Heart left ventricle (tissue), 16 donors: ENCODE measurements at regions of chr21 and their contacts with region 1.

Region 1: DNA sequence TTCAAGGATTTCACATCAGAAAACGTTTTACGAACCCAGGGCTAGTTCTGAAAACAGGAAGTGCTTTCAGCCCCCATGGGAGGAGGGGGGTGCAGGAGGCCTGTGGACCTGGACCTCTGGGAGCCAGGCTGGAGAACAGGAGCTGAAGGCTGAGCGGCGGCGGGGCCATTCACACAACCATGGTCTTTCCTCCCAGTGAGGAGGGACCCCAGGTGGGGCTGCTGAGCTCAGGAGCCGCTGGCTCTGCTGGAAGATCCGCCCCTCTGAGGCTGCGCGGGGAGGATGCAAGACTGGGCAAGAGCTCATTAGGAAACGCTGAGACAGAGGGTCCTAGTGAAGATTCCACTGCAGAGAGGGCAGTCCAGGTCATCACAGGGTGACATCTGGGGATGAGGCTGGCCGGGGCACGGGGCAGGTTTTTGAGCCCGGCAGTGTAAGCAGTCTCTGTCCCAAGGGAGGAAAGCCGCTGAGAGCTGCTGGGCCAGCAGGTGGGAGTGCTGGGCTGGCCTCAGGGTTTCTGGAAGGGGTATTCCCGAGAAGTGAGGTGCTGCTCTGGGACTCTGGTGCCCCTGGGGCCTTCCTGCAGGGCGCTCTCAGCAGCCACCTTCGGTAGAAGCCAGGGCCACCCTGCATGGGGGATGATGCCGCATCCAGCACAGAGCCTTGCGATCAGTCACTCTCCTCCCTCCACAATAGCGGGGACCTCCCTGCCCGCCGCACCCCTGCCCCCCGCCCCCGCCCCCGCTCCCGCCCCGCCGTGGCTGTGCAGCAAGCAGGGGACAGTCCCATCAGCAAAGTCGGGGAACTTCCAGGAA is 7.5 kb downstream of the MX2 start:
- DNase-seq: peak; percentile 49 to 75 (median 60)
- ATAC-seq: peak in 3 of 4 donors; percentile 40 to 67 (median 47)
- H3K4me3 ChIP-seq: peak overlapping the region; percentile 12 to 57 (median 46)
- H3K27ac ChIP-seq: peak overlapping the region in 11 of 12 donors; percentile 31 to 84 (median 67)
- H3K4me1 ChIP-seq: peaks cover 0 to 67% (median 20%) of the 10 kb centered on the region in 12 donors
- H3K27me3 ChIP-seq: peaks cover 0 to 10% (median 0%) of the 10 kb centered on the region in 9 donors
- CTCF ChIP-seq: no peak
- POLR2A ChIP-seq: no peak

Region 2: GRCh38 chr21:41419911-41420862 is 50.9 kb after region 1 on chr21:
- intact Hi-C with region 1: loop called in 5 of 10 experiments (anchors 5 kb)
- DNase-seq: peak; percentile 84 to 90 (median 86)
- ATAC-seq: peak; percentile 84 to 97 (median 95)
- H3K4me3 ChIP-seq: peak overlapping the region; percentile 40 to 88 (median 68)
- H3K27ac ChIP-seq: peak overlapping the region; percentile 13 to 95 (median 90)
- H3K4me1 ChIP-seq: peaks cover 0 to 36% (median 7%) of the 10 kb centered on the region in 12 donors
- H3K27me3 ChIP-seq: no peaks in the 10 kb centered on the region
- CTCF ChIP-seq: peak in 1 of 12 donors; percentile 15
- POLR2A ChIP-seq: no peak